Naive thymus-derived CD4-positive, alpha-beta T cell (primary cell): ENCODE measurements at regions of chr3 and their contacts with region 1.

Region 1: GRCh38 chr3:67601911-67602608 is 52.4 kb downstream of the SUCLG2 start:
- DNase-seq: peak in 6 of 9 donors; percentile 8 to 31 (median 16)
- ATAC-seq: peak; percentile 72
- H3K4me3 ChIP-seq: peak overlapping the region; percentile 5
- H3K4me3 Mint-ChIP-seq: peak overlapping the region; percentile 65 to 90 (median 77)
- H3K27ac ChIP-seq: peak overlapping the region; percentile 66
- H3K27ac Mint-ChIP-seq: peak overlapping the region; percentile 56 to 95 (median 81)
- H3K4me1 ChIP-seq: peaks cover 30 to 69% of the 10 kb centered on the region in 2 donors
- H3K4me1 Mint-ChIP-seq: peaks cover 48 to 93% (median 86%) of the 10 kb centered on the region in 7 donors
- H3K27me3 ChIP-seq: no peaks in the 10 kb centered on the region
- H3K27me3 Mint-ChIP-seq: no peaks in the 10 kb centered on the region

Region 2: GRCh38 chr3:67296039-67296892 is 305.8 kb before region 1 on chr3:
- CTCF ChIA-PET with region 1: no interaction called
- POLR2A ChIA-PET with region 1: no interaction called
- intact Hi-C with region 1: no loop called
- DNase-seq: no peak
- ATAC-seq: no peak
- H3K4me3 ChIP-seq: no peak overlapping the region
- H3K4me3 Mint-ChIP-seq: no peak overlapping the region
- H3K27ac ChIP-seq: no peak overlapping the region
- H3K27ac Mint-ChIP-seq: no peak overlapping the region
- H3K4me1 ChIP-seq: no peaks in the 10 kb centered on the region
- H3K4me1 Mint-ChIP-seq: no peaks in the 10 kb centered on the region
- H3K27me3 ChIP-seq: no peaks in the 10 kb centered on the region
- H3K27me3 Mint-ChIP-seq: no peaks in the 10 kb centered on the region

Region 3: GRCh38 chr3:67587811-67588210 is 14.2 kb before region 1 on chr3:
- CTCF ChIA-PET with region 1: no interaction called
- POLR2A ChIA-PET with region 1: no interaction called
- intact Hi-C with region 1: loop called in 1 of 2 experiments (anchors 2 kb)
- DNase-seq: no peak
- ATAC-seq: no peak
- H3K4me3 ChIP-seq: no peak overlapping the region
- H3K4me3 Mint-ChIP-seq: no peak overlapping the region
- H3K27ac ChIP-seq: no peak overlapping the region
- H3K27ac Mint-ChIP-seq: peak overlapping the region in 2 of 9 donors; percentile 19 to 28
- H3K4me1 ChIP-seq: peaks cover 0 to 14% of the 10 kb centered on the region in 2 donors
- H3K4me1 Mint-ChIP-seq: peaks cover 17 to 95% (median 74%) of the 10 kb centered on the region in 7 donors
- H3K27me3 ChIP-seq: no peaks in the 10 kb centered on the region
- H3K27me3 Mint-ChIP-seq: no peaks in the 10 kb centered on the region

Region 4: DNA sequence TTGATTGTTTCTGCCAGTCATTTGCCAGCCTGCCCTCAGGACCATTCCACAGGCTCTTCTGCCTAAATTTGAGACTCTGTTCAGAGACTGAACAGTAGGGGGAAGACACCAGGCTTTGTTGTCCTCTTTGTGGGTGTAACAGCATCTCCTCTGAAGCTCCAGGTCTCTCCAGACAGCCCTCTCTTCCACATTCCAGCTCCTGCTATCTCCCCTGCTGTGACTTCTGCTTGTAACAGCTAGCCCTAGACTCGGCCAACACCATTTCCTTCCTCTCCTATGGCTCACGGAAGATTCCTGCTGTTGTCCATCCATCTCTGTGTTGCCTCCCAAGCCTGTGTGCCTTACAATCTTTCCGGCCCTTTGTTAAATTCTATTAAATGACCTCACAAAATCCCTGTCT is 12.1 kb after region 1 on chr3:
- CTCF ChIA-PET with region 1: interaction called, 6 read pairs
- POLR2A ChIA-PET with region 1: interaction called, 10 read pairs
- intact Hi-C with region 1: no loop called
- DNase-seq: no peak
- ATAC-seq: no peak
- H3K4me3 ChIP-seq: no peak overlapping the region
- H3K4me3 Mint-ChIP-seq: no peak overlapping the region
- H3K27ac ChIP-seq: no peak overlapping the region
- H3K27ac Mint-ChIP-seq: peak overlapping the region in 8 of 9 donors; percentile 24 to 81 (median 62)
- H3K4me1 ChIP-seq: no peaks in the 10 kb centered on the region
- H3K4me1 Mint-ChIP-seq: peaks cover 5 to 68% (median 55%) of the 10 kb centered on the region in 7 donors
- H3K27me3 ChIP-seq: no peaks in the 10 kb centered on the region
- H3K27me3 Mint-ChIP-seq: no peaks in the 10 kb centered on the region

Region 5: GRCh38 chr3:67619991-67620390 is 17.9 kb after region 1 on chr3:
- CTCF ChIA-PET with region 1: interaction called, 6 read pairs
- POLR2A ChIA-PET with region 1: interaction called, 3 read pairs
- intact Hi-C with region 1: loop called in 1 of 2 experiments (anchors 2 kb)
- DNase-seq: no peak
- ATAC-seq: no peak
- H3K4me3 ChIP-seq: no peak overlapping the region
- H3K4me3 Mint-ChIP-seq: peak overlapping the region in 2 of 10 donors; percentile 12 to 15
- H3K27ac ChIP-seq: no peak overlapping the region
- H3K27ac Mint-ChIP-seq: peak overlapping the region in 6 of 9 donors; percentile 39 to 53 (median 51)
- H3K4me1 ChIP-seq: peaks cover 0 to 3% of the 10 kb centered on the region in 2 donors
- H3K4me1 Mint-ChIP-seq: peaks cover 10 to 84% (median 76%) of the 10 kb centered on the region in 7 donors
- H3K27me3 ChIP-seq: no peaks in the 10 kb centered on the region
- H3K27me3 Mint-ChIP-seq: no peaks in the 10 kb centered on the region